GM12878 (cell line): ENCODE measurements at regions of chr18 and their contacts with region 1.

Region 1: GRCh38 chr18:49459404-49460171 is 857 bp downstream of the DYM start:
- DNase-seq: no peak
- ATAC-seq: peak; percentile 71
- H3K4me3 ChIP-seq: peak overlapping the region; percentile 84
- H3K27ac ChIP-seq: peak overlapping the region; percentile 72
- H3K4me1 ChIP-seq: peaks cover 3% of the 10 kb centered on the region; the same call in 1 of the 2 replicates
- H3K27me3 ChIP-seq: no peaks in the 10 kb centered on the region
- CTCF ChIP-seq: no peak
- EP300 ChIP-seq: no peak
- POLR2A ChIP-seq: no peak
- RAD21 ChIP-seq: no peak

Region 2: GRCh38 chr18:49476664-49477411 is 17.2 kb after region 1 on chr18:
- CTCF ChIA-PET with region 1: no interaction called
- POLR2A ChIA-PET with region 1: interaction called, 12 read pairs
- RAD21 ChIA-PET with region 1: interaction called, 4 read pairs
- SMC1A ChIA-PET with region 1: interaction called, 4 read pairs
- in situ Hi-C with region 1: no loop called
- intact Hi-C with region 1: loop called (anchors 2 kb)
- DNase-seq: no peak
- ATAC-seq: peak; percentile 88
- H3K4me3 ChIP-seq: no peak overlapping the region; the same call in 1 of the 2 replicates
- H3K27ac ChIP-seq: peak overlapping the region; percentile 37; the same call in 1 of the 2 replicates
- H3K4me1 ChIP-seq: peaks cover 12% of the 10 kb centered on the region
- H3K27me3 ChIP-seq: no peaks in the 10 kb centered on the region
- CTCF ChIP-seq: no peak
- EP300 ChIP-seq: no peak
- POLR2A ChIP-seq: no peak
- RAD21 ChIP-seq: no peak